HEK293 (cell line): ENCODE measurements at regions of chr2 and their contacts with region 1.

Region 1: DNA sequence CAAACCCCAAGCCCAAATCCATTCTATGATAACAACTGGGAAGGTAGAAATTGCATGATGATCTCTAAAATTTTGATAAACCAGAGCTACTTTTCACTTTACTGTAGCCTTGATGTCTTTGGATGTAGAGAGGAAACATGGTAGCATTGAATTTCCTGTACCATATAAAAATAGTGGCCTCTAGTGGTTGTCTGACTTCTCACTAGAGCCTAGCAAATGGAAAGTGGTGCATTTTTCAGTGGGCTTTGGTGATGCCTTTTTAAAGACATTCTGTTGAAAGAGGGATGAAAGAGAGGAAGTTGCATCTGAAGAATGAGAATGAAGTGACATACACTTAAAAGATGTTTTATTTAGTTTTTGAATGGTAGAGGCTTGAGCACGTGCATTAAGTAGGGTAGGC is 662.2 kb downstream of the XIRP2 start:
- H3K4me3 ChIP-seq: no peak overlapping the region
- H3K27ac ChIP-seq: no peak overlapping the region
- H3K4me1 ChIP-seq: no peaks in the 10 kb centered on the region
- CTCF ChIP-seq: no peak

Region 2: GRCh38 chr2:167534443-167534842 is 16.0 kb before region 1 on chr2:
- CTCF ChIA-PET with region 1: interaction called, 10 read pairs
- POLR2A ChIA-PET with region 1: no interaction called
- H3K4me3 ChIP-seq: no peak overlapping the region
- H3K27ac ChIP-seq: no peak overlapping the region
- H3K4me1 ChIP-seq: no peaks in the 10 kb centered on the region
- CTCF ChIP-seq: no peak

Region 3: DNA sequence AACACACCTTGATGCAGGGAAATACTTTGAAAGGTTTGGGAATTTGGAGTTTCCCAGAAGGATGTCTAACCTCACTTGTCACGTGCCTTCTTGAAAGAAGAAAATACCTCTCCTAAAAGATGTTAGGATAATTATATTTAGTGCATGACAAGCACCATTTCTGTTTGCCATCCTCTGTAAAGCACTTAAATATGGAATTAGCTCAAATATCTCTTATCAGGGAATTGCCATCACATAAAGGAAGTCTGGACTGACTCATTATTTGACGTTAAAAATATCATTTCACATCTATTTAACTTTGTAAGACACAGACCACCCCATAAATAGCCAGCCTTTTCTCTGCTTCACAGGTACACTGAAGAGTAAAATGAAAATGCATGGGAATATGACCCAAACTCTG is 556.9 kb after region 1 on chr2:
- CTCF ChIA-PET with region 1: no interaction called
- POLR2A ChIA-PET with region 1: no interaction called
- H3K4me3 ChIP-seq: no peak overlapping the region
- H3K27ac ChIP-seq: no peak overlapping the region
- H3K4me1 ChIP-seq: no peaks in the 10 kb centered on the region
- CTCF ChIP-seq: no peak